Activated CD4-positive, alpha-beta T cell treated with anti-CD3 and anti-CD28 coated beads, Interleukin-2, amount 10 ng/mL, durations not matched to agents 24 days and 14 days (primary cell): ENCODE measurements at regions of chr2 and their contacts with region 1.

Region 1: DNA sequence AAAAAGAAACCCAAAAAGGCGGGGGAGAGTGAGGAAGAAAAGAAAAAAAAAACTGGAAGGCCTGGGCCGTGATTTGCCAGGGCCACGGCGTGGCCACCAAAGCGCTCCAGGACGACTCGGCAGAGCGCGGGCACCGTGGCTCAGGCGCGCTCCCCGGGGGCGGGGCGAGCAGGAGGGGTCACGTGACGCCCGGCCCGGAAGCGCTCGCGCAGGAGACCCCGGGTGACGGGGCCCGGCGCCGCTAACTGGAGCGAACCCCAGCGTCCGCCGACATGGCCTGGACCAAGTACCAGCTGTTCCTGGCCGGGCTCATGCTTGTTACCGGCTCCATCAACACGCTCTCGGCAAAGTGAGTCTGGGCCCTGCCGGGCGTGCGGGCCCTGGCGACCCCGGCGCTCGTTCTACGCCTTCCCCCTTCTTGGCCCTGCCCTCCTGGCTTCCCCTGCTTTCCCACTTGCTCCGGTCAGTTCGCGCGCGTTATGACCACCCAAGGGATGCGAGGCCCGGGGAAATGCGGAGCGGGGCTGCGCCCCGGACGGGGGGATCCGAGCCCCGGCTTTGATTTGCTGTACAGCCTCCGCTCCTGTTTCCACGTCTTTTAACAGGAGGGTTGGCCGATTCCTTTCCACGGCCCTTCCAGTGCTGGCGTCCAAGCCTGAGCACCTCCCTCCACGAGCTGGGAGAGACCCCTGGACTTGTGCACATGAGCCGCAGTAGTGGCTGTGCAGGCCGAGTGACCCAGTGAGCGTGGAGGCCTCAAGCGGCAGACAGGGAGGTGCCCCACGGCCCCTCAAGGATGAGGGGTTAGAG is at the start of gene SLC35F6:
- DNase-seq: peak; percentile 96
- H3K4me3 Mint-ChIP-seq: peak within 1 kb of the TSS; percentile 90
- H3K27ac Mint-ChIP-seq: peak within 1 kb of the TSS; percentile 88
- H3K4me1 Mint-ChIP-seq: peaks cover 38% of the 10 kb centered on the region
- H3K27me3 Mint-ChIP-seq: peaks cover 5% of the 10 kb centered on the region
- total RNA-seq, gene SLC35F6: 10.5 and 11.5 TPM in 2 replicates

Region 2: GRCh38 chr2:26691881-26692278 is 72.4 kb before region 1 on chr2:
- intact Hi-C with region 1: loop called (anchors 2 kb)
- DNase-seq: no peak
- H3K4me3 Mint-ChIP-seq: no peak overlapping the region
- H3K27ac Mint-ChIP-seq: no peak overlapping the region
- H3K4me1 Mint-ChIP-seq: no peaks in the 10 kb centered on the region
- H3K27me3 Mint-ChIP-seq: peaks cover 61% of the 10 kb centered on the region

Region 3: GRCh38 chr2:26785431-26786206 is 21.3 kb after region 1 on chr2 and contains the start of gene CENPA:
- intact Hi-C with region 1: loop called (anchors 1 kb)
- DNase-seq: peak; percentile 98
- H3K4me3 Mint-ChIP-seq: peak within 1 kb of the TSS; percentile 90
- H3K27ac Mint-ChIP-seq: peak within 1 kb of the TSS; percentile 85
- H3K4me1 Mint-ChIP-seq: peaks cover 31% of the 10 kb centered on the region
- H3K27me3 Mint-ChIP-seq: no peaks in the 10 kb centered on the region
- total RNA-seq, gene CENPA: 21.8 and 23.6 TPM in 2 replicates